Sigmoid colon (tissue), 7 donors: ENCODE measurements at regions of chr5 and their contacts with region 1.

Region 1: GRCh38 chr5:127564002-127564769 is 46.7 kb downstream of the PRRC1 start:
- DNase-seq: no peak
- H3K4me3 ChIP-seq: no peak overlapping the region
- H3K27ac ChIP-seq: peak overlapping the region in 2 of 4 donors; percentile 9 to 56
- H3K4me1 ChIP-seq: peaks cover 0 to 32% (median 22%) of the 10 kb centered on the region in 4 donors
- H3K27me3 ChIP-seq: no peaks in the 10 kb centered on the region
- CTCF ChIP-seq: peak; percentile 26 to 66 (median 51)
- EP300 ChIP-seq: no peak
- POLR2A ChIP-seq: no peak

Region 2: DNA sequence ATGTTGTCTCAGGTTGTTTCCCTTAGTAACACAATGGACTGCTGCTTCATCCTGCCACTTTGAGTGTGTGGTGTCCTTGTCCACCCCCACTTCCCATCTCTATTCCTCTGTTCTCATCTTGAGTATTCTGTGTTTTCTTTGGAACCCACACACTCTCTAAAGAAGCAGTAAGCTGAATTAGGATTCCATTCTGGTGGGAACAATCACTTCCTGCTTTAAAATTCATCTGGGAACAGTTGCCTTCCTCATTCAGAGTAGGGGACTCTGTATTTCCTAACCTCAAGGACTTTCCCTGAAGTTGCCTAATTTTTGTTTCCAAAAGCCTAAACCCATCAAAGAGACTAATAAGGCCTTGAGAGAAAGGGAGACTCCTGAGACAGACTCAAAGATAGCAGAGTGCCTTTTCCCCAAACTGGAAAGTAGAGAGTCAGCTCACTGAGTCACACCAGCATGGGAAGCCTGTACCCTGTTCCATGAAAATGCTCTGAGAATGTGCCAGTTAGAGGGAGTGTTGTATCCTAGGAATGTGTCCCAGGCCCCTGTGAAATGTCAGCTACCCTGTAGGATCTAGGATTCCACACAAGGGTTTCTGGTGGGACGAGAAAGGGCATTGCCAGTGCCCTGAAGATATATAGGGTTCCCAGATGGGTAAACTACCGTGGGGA is 202.6 kb after region 1 on chr5:
- intact Hi-C with region 1: loop called (anchors 10 kb)
- DNase-seq: no peak
- H3K4me3 ChIP-seq: no peak overlapping the region
- H3K27ac ChIP-seq: no peak overlapping the region
- H3K4me1 ChIP-seq: peaks cover 0 to 16% (median 12%) of the 10 kb centered on the region in 4 donors
- H3K27me3 ChIP-seq: no peaks in the 10 kb centered on the region
- CTCF ChIP-seq: no peak
- EP300 ChIP-seq: no peak
- POLR2A ChIP-seq: no peak

Region 3: DNA sequence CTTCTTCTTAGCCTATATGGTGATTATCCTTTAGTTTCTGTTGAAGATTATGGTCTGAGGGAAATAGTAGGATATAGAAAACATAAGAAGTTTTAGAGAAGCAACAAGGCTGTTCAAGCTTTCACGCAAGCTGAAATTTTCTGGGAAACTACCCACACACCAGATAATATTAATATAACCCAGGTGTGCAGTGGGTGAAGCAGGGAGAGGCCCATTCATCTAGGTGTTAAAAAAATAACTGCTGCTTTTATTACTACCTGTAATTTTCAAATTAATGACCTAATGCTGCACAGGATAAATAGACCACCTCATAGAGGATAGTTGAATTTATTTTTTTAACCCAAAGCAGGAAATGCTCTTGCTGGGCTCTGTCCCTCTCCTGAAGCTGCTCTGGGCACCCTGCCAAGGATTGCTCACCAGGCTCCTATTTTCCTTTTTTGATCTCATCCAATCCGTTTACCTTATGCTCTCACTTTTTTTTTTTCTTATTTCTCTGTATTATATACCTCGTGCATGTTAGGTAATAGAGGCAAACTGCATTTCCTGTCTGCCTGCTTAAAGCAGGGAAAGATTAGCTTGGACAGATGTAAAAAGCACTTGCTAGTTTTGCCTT is 395.1 kb after region 1 on chr5:
- intact Hi-C with region 1: no loop called
- DNase-seq: peak; percentile 83
- H3K4me3 ChIP-seq: no peak overlapping the region
- H3K27ac ChIP-seq: peak overlapping the region; percentile 38 to 71 (median 54)
- H3K4me1 ChIP-seq: peaks cover 0 to 51% (median 40%) of the 10 kb centered on the region in 4 donors
- H3K27me3 ChIP-seq: no peaks in the 10 kb centered on the region
- CTCF ChIP-seq: no peak
- EP300 ChIP-seq: no peak
- POLR2A ChIP-seq: no peak